ENCODE measurements at regions of chr10 and their contacts with region 1.

Region 1: GRCh38 chr10:102641880-102642735 is 2.2 kb upstream of the TRIM8 start:
- DNase-seq: peak; percentile 99
- H3K4me3 Mint-ChIP-seq: peak overlapping the region; percentile 92
- H3K27ac Mint-ChIP-seq: peak overlapping the region; percentile 92
- H3K4me1 Mint-ChIP-seq: peaks cover 18% of the 10 kb centered on the region
- H3K27me3 Mint-ChIP-seq: no peaks in the 10 kb centered on the region

Region 2: DNA sequence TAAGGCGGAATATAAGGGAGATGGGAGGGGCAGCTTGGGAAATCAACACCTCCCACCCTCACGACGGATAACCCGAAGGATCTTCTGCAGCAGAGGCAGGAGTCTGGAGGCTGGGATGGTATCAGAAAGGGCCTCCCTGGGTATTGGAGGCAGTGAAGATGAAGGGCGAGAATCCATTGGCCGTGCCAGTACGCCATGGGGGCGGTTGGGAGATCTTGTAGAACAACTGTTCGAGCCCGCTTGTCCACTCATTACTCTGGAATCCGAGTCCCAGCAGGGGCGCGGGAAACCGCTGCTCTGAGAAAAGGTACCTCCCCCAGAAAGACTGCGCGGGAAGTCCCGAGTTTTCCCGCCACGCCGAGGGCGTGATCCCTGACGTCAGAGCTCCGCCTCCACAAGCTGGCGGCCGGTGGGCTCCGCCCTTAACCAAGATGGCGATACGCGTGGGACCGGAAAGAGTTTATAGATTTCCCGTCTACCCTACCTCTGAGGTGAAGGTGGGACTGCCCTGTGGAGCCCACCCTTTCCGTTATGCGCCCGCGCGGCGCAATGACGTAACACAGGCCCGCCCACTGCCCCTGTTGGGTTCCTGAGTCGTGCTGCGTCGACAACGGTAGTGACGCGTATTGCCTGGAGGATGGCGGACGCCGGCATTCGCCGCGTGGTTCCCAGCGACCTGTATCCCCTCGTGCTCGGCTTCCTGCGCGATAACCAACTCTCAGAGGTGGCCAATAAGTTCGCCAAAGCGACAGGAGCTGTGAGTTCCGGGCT is 490.1 kb before region 1 on chr10 and contains the start of gene NOLC1:
- intact Hi-C with region 1: loop called (anchors 10 kb)
- DNase-seq: peak; percentile 100
- H3K4me3 Mint-ChIP-seq: peak within 1 kb of the TSS; percentile 99
- H3K27ac Mint-ChIP-seq: peak within 1 kb of the TSS; percentile 99
- H3K4me1 Mint-ChIP-seq: peaks cover 45% of the 10 kb centered on the region
- H3K27me3 Mint-ChIP-seq: peaks cover 2% of the 10 kb centered on the region
- total RNA-seq, gene NOLC1: 268 and 281 TPM in 2 replicates

Region 3: GRCh38 chr10:102450194-102450938 is 191.7 kb before region 1 on chr10:
- intact Hi-C with region 1: loop called (anchors 5 kb)
- DNase-seq: peak; percentile 97
- H3K4me3 Mint-ChIP-seq: peak overlapping the region; percentile 98
- H3K27ac Mint-ChIP-seq: peak overlapping the region; percentile 97
- H3K4me1 Mint-ChIP-seq: peaks cover 29% of the 10 kb centered on the region
- H3K27me3 Mint-ChIP-seq: no peaks in the 10 kb centered on the region

Region 4: DNA sequence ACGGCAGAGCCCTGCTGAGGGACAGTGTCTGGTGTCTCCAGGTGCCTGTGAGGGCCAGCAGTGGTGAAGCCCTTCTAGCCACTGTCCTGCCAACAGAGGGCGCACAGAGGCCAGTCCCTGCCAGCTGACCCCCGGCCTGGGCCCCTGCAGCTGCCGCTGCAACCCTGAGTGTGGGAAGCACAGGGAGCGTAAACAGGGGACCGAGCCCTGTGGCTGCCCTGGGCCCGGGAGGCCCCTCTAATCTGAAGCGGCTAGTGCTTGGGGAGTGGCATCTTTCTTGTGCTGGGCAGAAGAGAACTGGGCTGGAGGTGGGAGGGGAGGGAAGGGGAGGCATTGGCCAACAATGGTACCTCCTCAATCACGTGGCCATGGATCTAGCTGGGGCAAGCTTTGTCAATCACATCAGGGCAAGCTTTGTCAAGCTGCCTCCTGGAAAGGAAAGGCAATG is 36.8 kb after region 1 on chr10:
- intact Hi-C with region 1: loop called (anchors 2 kb)
- DNase-seq: peak; percentile 67
- H3K4me3 Mint-ChIP-seq: no peak overlapping the region
- H3K27ac Mint-ChIP-seq: no peak overlapping the region
- H3K4me1 Mint-ChIP-seq: peaks cover 30% of the 10 kb centered on the region
- H3K27me3 Mint-ChIP-seq: no peaks in the 10 kb centered on the region

Region 5: GRCh38 chr10:102743588-102744373 is 101.7 kb after region 1 on chr10 and contains the start of gene WBP1L:
- intact Hi-C with region 1: loop called (anchors 1 kb)
- DNase-seq: peak; percentile 98
- H3K4me3 Mint-ChIP-seq: peak within 1 kb of the TSS; percentile 83
- H3K27ac Mint-ChIP-seq: peak within 1 kb of the TSS; percentile 81
- H3K4me1 Mint-ChIP-seq: peaks cover 38% of the 10 kb centered on the region
- H3K27me3 Mint-ChIP-seq: no peaks in the 10 kb centered on the region
- total RNA-seq, gene WBP1L: 15.6 and 15.8 TPM in 2 replicates